Psoas muscle (tissue), 8 donors: ENCODE measurements at regions of chr16 and their contacts with region 1.

Region 1: GRCh38 chr16:70770626-70771552 is 30.1 kb downstream of the VAC14 start:
- DNase-seq: peak; percentile 67 to 83
- ATAC-seq: peak; percentile 77 to 87 (median 82)
- H3K4me3 ChIP-seq: no peak overlapping the region
- H3K27ac ChIP-seq: peak overlapping the region; percentile 49
- H3K4me1 ChIP-seq: peaks cover 48% of the 10 kb centered on the region
- H3K27me3 ChIP-seq: no peaks in the 10 kb centered on the region
- CTCF ChIP-seq: peak; percentile 97

Region 2: GRCh38 chr16:70529051-70529777 is 241.7 kb before region 1 on chr16:
- intact Hi-C with region 1: loop called in 1 of 2 experiments (anchors 5 kb)
- DNase-seq: no peak
- ATAC-seq: peak in 2 of 4 donors; percentile 57 to 63
- H3K4me3 ChIP-seq: peak overlapping the region; percentile 29
- H3K27ac ChIP-seq: peak overlapping the region; percentile 36
- H3K4me1 ChIP-seq: peaks cover 47% of the 10 kb centered on the region
- H3K27me3 ChIP-seq: no peaks in the 10 kb centered on the region
- CTCF ChIP-seq: peak; percentile 47

Region 3: DNA sequence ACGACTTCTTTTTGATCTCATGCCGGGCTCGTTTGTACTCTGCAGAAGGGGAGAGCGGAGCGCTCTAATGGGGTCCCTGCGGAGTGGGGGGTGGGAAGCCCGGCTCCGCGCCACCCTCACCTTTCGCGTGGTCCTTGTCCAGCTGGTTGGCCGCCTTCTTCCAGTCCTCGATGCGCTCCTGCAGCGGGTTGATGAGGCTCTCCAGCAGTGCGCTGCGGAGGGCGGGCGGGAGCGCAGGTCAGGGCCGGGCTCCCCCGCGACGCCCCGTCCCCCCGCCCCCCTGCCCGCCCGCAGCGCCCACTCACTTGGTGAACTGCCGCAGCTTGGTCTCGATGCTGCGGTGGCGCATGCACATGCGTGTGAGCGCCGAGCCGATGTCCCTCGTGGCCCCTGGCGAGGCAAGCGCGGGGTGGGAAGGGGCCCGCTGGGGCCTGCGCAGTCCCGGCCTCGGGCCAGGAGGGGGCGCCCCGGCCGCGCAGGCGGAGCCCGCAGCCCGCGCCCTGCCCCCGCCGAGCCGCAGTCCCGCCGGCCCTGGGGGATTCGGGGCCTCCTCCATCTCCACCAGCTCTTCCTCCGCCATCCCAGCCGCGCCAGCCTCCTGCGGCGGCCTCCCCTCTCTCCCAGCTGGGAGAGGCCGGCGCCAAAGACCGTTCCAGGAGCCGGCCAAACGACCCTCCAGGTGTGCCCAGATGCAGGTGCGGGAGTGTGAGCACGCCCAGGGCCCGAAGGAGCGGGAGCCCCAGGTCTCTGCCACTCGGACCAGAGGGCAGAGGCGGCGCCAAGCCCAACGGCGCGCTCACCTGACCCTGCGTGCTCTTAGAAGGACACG is 91.0 kb before region 1 on chr16:
- intact Hi-C with region 1: loop called (anchors 2 to 5 kb)
- DNase-seq: peak; percentile 47 to 72
- ATAC-seq: peak; percentile 57 to 68 (median 60)
- H3K4me3 ChIP-seq: no peak overlapping the region
- H3K27ac ChIP-seq: peak overlapping the region; percentile 61
- H3K4me1 ChIP-seq: peaks cover 38% of the 10 kb centered on the region
- H3K27me3 ChIP-seq: no peaks in the 10 kb centered on the region
- CTCF ChIP-seq: peak; percentile 58

Region 4: GRCh38 chr16:70750893-70751475 is 19.9 kb before region 1 on chr16:
- intact Hi-C with region 1: loop called (anchors 2 kb)
- DNase-seq: peak; percentile 92 to 96
- ATAC-seq: peak; percentile 71 to 86 (median 83)
- H3K4me3 ChIP-seq: no peak overlapping the region
- H3K27ac ChIP-seq: peak overlapping the region; percentile 75
- H3K4me1 ChIP-seq: peaks cover 70% of the 10 kb centered on the region
- H3K27me3 ChIP-seq: no peaks in the 10 kb centered on the region
- CTCF ChIP-seq: peak; percentile 15